ENCODE measurements at regions of chr7 and their contacts with region 1.

Region 1: GRCh38 chr7:36487756-36488336 is 98.2 kb downstream of the ANLN start:
- DNase-seq: no peak
- H3K4me3 ChIP-seq: no peak overlapping the region
- H3K27ac ChIP-seq: no peak overlapping the region
- H3K4me1 ChIP-seq: no peaks in the 10 kb centered on the region
- H3K27me3 ChIP-seq: no peaks in the 10 kb centered on the region
- CTCF ChIP-seq: peak in 2 of 3 experiments; percentile 69 to 78; a peak in 3 of 4 replicates
- EP300 ChIP-seq: no peak
- POLR2A ChIP-seq: no peak
- RAD21 ChIP-seq: peak; percentile 96

Region 2: DNA sequence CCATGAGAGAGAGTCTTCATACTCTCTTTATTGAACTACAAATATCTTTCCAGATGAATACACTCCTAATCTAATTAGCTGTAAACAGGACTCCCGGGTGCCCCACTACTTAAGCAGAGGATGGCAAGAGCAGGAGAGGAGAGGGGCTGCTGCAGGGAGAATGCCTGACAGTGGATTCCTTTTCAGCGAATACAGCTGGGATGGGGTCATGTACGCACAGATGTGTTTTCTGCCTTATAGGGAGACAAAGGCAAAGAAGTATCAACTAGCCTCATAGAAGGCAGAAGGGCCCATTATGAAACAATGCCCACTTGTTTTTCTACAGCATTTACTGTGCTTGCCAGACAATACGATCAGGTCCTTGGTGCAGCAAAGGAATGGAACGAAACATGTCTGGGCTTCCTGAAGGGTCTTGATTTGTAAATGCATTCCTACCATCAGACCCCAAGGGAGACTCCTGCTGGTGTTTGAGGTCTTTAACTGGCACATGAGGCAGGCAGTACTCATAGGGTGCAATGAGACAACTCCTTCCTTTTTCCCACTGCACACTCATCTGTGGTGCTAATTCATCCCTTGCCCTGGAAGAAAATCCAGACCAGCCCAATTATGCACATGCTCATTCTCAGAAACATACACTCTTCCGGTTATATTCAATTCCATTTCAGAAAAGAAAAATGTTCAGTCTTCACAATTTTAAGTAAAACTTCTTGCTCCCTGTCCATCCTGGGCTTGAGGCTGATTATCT is 119.3 kb after region 1 on chr7:
- CTCF ChIA-PET with region 1: interaction called, 10 read pairs
- POLR2A ChIA-PET with region 1: no interaction called
- DNase-seq: no peak
- H3K4me3 ChIP-seq: no peak overlapping the region
- H3K27ac ChIP-seq: no peak overlapping the region
- H3K4me1 ChIP-seq: peaks cover 0 to 5% (median 0%) of the 10 kb centered on the region in 4 experiments; a peak in 3 of 7 replicates
- H3K27me3 ChIP-seq: no peaks in the 10 kb centered on the region
- CTCF ChIP-seq: no peak
- EP300 ChIP-seq: no peak
- POLR2A ChIP-seq: no peak
- RAD21 ChIP-seq: no peak

Measured in H1 (cell line).